ENCODE measurements at regions of chr2 and their contacts with region 1.

Region 1: DNA sequence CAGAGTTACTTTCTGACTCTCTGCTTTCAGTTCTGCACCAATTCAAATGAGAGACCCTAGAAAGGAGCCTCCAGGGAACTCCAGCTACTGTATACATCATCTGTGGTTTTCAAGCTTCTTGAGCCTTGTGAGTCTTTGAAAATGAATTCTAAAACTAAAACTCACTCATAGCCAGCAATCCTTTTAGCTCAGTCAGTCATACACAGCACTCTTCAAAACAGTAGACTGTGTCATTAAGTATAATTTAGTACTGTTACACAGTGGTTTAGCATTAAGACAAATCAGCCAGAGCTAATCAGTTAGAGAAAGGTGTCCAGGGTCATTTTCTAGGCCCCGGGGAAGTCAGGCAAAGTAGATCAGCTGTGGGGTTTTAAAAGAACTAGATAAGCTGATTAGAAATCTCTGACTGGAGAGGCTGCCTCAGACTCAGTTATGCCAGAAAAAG is 322.1 kb upstream of the THUMPD2 start:
- DNase-seq: peak; percentile 92
- ATAC-seq: peak; percentile 65
- H3K4me3 ChIP-seq: no peak overlapping the region
- H3K27ac ChIP-seq: peak overlapping the region; percentile 98
- H3K4me1 ChIP-seq: peaks cover 28% of the 10 kb centered on the region
- H3K27me3 ChIP-seq: no peaks in the 10 kb centered on the region
- CTCF ChIP-seq: no peak
- POLR2A ChIP-seq: peak; percentile 53
- RAD21 ChIP-seq: peak; percentile 5; the same call in 1 of the 2 replicates

Region 2: GRCh38 chr2:39994151-39994550 is 107.0 kb before region 1 on chr2:
- CTCF ChIA-PET with region 1: no interaction called
- POLR2A ChIA-PET with region 1: interaction called, 3 read pairs
- dilution Hi-C with region 1: no loop called
- in situ Hi-C with region 1: no loop called
- intact Hi-C with region 1: loop called (anchors 2 kb)
- DNase-seq: peak; percentile 92
- ATAC-seq: peak; percentile 77
- H3K4me3 ChIP-seq: no peak overlapping the region
- H3K27ac ChIP-seq: no peak overlapping the region
- H3K4me1 ChIP-seq: peaks cover 9% of the 10 kb centered on the region; the same call in 1 of the 2 replicates
- H3K27me3 ChIP-seq: no peaks in the 10 kb centered on the region
- CTCF ChIP-seq: no peak
- POLR2A ChIP-seq: no peak
- RAD21 ChIP-seq: no peak

Region 3: DNA sequence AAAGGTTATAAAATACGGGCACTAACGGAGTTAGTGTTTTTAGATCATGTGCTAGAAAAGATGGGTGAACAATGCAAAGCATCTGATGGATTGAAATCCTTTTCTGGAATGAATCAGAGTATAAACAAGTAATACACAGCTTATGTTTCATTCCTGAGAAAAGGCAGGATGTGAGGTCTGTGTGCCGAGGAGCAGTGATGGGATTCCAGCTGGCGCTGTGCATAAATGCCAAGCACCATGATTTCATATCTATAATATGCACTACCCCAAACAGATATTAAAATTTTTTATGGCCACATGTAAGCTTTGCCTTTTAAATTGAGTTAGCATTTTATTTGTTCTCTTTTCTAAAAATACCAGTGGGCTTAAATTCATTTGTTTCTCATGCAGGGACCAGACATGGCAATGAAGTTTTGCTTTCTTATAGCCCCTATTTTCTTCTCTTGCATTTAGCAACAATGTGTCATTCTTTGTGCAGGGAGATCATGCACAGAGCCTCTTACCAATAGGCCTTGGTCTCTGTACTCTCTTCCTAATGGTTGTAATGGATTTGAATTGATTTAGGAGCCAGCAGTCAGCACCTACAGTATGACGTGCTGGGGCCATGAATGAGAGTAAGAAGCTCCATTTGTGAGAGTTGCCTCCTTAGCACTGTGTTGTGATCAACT is 26.9 kb after region 1 on chr2:
- CTCF ChIA-PET with region 1: no interaction called
- POLR2A ChIA-PET with region 1: interaction called, 4 read pairs
- dilution Hi-C with region 1: no loop called
- in situ Hi-C with region 1: no loop called
- intact Hi-C with region 1: loop called (anchors 1 kb)
- DNase-seq: peak; percentile 97
- ATAC-seq: peak; percentile 79
- H3K4me3 ChIP-seq: no peak overlapping the region
- H3K27ac ChIP-seq: peak overlapping the region; percentile 97
- H3K4me1 ChIP-seq: peaks cover 43% of the 10 kb centered on the region
- H3K27me3 ChIP-seq: no peaks in the 10 kb centered on the region
- CTCF ChIP-seq: no peak
- POLR2A ChIP-seq: no peak
- RAD21 ChIP-seq: peak; percentile 14; the same call in 1 of the 2 replicates

Region 4: DNA sequence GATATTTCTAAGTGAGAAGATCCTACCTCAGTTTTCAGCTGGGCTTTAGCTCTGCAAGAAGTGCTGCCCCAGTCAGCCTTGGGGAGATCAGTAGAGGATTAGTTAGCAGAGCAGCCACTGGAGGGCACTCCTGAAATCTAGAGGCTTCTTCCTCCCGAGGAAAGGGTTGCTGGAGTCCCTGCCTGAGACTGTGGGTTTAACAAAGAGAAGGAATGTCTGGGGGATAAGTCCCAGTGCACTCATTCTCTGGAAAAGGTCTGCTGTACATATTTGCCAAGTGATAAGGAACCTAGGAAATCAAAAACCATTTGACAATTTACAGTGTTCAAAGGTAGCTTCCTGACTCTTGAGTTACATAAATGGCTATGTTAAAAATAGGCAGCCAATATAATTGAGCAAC is 143.5 kb after region 1 on chr2:
- CTCF ChIA-PET with region 1: interaction called, 5 read pairs
- POLR2A ChIA-PET with region 1: no interaction called
- dilution Hi-C with region 1: no loop called
- in situ Hi-C with region 1: no loop called
- intact Hi-C with region 1: loop called (anchors 2 kb)
- DNase-seq: peak; percentile 75
- ATAC-seq: peak; percentile 59
- H3K4me3 ChIP-seq: no peak overlapping the region
- H3K27ac ChIP-seq: no peak overlapping the region
- H3K4me1 ChIP-seq: peaks cover 31% of the 10 kb centered on the region
- H3K27me3 ChIP-seq: no peaks in the 10 kb centered on the region
- CTCF ChIP-seq: peak; percentile 61
- POLR2A ChIP-seq: 0 out of 2 replicates have a peak, but pooled peaks have one; percentile 26
- RAD21 ChIP-seq: peak; percentile 67

Region 5: GRCh38 chr2:40371525-40372282 is 270.6 kb after region 1 on chr2:
- CTCF ChIA-PET with region 1: no interaction called
- POLR2A ChIA-PET with region 1: no interaction called
- dilution Hi-C with region 1: no loop called
- in situ Hi-C with region 1: no loop called
- intact Hi-C with region 1: loop called (anchors 5 kb)
- DNase-seq: peak; percentile 90
- ATAC-seq: peak; percentile 85
- H3K4me3 ChIP-seq: no peak overlapping the region
- H3K27ac ChIP-seq: peak overlapping the region; percentile 70
- H3K4me1 ChIP-seq: peaks cover 19% of the 10 kb centered on the region
- H3K27me3 ChIP-seq: no peaks in the 10 kb centered on the region
- CTCF ChIP-seq: no peak
- POLR2A ChIP-seq: peak; percentile 5
- RAD21 ChIP-seq: no peak

Region 6: DNA sequence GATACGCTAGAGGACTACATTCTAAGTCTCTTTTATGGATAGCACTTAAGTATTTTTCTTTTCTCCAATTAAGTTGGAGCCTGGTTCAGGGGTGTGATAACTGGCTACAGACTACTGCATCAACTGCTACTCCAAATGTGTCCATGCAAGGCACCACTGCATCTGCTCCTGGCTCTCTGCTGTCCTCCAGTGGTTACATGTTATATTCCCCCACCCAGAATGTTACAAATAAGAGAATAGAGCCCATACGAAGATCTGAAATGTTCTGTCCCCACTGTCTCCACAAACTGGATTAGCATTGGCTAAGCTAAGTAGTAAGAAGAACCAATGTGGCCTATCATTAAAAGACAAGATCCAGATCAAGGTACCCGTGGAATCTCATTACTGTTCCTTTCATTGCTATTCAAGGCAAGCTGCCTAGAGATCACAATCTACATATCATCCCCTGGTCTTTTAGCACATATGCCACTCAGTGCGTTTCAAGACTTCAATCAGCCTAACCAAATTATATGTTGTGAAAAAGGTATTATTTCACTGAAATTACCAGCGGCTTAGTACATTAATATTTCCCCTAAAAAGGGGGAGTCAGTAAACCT is 659.0 kb after region 1 on chr2:
- CTCF ChIA-PET with region 1: no interaction called
- POLR2A ChIA-PET with region 1: no interaction called
- dilution Hi-C with region 1: no loop called
- in situ Hi-C with region 1: no loop called
- intact Hi-C with region 1: loop called (anchors 10 kb)
- DNase-seq: peak; percentile 69
- ATAC-seq: peak; percentile 99
- H3K4me3 ChIP-seq: no peak overlapping the region
- H3K27ac ChIP-seq: no peak overlapping the region
- H3K4me1 ChIP-seq: no peaks in the 10 kb centered on the region
- H3K27me3 ChIP-seq: no peaks in the 10 kb centered on the region
- CTCF ChIP-seq: peak; percentile 97
- POLR2A ChIP-seq: no peak
- RAD21 ChIP-seq: peak; percentile 98